Esophagus squamous epithelium (tissue), 5 donors: ENCODE measurements at regions of chr14 and their contacts with region 1.

Region 1: GRCh38 chr14:58072288-58073071 is 79.5 kb downstream of the ARMH4 start:
- DNase-seq: no peak
- H3K4me3 ChIP-seq: peak overlapping the region in 1 of 4 donors; percentile 46
- H3K27ac ChIP-seq: no peak overlapping the region
- H3K4me1 ChIP-seq: peaks cover 0 to 4% (median 0%) of the 10 kb centered on the region in 3 donors
- H3K27me3 ChIP-seq: no peaks in the 10 kb centered on the region
- CTCF ChIP-seq: peak in 5 of 6 experiments; percentile 41 to 74 (median 67)
- POLR2A ChIP-seq: no peak

Region 2: GRCh38 chr14:57486767-57487379 is 585.6 kb before region 1 on chr14:
- intact Hi-C with region 1: loop called (anchors 10 kb)
- DNase-seq: no peak
- H3K4me3 ChIP-seq: no peak overlapping the region
- H3K27ac ChIP-seq: no peak overlapping the region
- H3K4me1 ChIP-seq: no peaks in the 10 kb centered on the region
- H3K27me3 ChIP-seq: peaks cover 0 to 7% (median 0%) of the 10 kb centered on the region in 4 donors
- CTCF ChIP-seq: peak in 5 of 6 experiments; percentile 37 to 58 (median 45)
- POLR2A ChIP-seq: no peak

Region 3: DNA sequence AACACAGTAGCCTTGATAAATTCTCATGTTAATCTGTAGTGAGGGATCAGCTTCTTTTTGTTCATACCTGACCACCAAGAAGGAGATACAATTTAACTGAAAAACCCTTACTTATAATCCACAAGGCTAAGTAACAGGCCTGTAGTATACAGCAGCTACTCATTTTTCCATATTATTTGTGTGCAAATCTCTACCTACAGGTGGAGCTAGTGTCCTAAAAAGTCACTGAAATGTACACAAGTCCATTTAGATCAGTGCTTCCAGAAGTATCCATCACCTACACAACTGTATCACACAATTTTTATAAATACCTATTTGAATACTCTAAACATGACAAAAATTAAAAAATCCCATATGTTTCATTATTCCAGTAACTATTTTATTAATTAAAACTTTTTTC is 379.8 kb before region 1 on chr14:
- intact Hi-C with region 1: loop called (anchors 10 kb)
- DNase-seq: no peak
- H3K4me3 ChIP-seq: no peak overlapping the region
- H3K27ac ChIP-seq: no peak overlapping the region
- H3K4me1 ChIP-seq: no peaks in the 10 kb centered on the region
- H3K27me3 ChIP-seq: no peaks in the 10 kb centered on the region
- CTCF ChIP-seq: peak; percentile 13 to 67 (median 26)
- POLR2A ChIP-seq: no peak

Region 4: GRCh38 chr14:57785058-57785457 is 287.4 kb before region 1 on chr14:
- intact Hi-C with region 1: no loop called
- DNase-seq: no peak
- H3K4me3 ChIP-seq: no peak overlapping the region
- H3K27ac ChIP-seq: no peak overlapping the region
- H3K4me1 ChIP-seq: no peaks in the 10 kb centered on the region
- H3K27me3 ChIP-seq: no peaks in the 10 kb centered on the region
- CTCF ChIP-seq: no peak
- POLR2A ChIP-seq: no peak

Region 5: GRCh38 chr14:58133739-58134138 is 61.3 kb after region 1 on chr14:
- intact Hi-C with region 1: no loop called
- DNase-seq: no peak
- H3K4me3 ChIP-seq: no peak overlapping the region
- H3K27ac ChIP-seq: no peak overlapping the region
- H3K4me1 ChIP-seq: no peaks in the 10 kb centered on the region
- H3K27me3 ChIP-seq: no peaks in the 10 kb centered on the region
- CTCF ChIP-seq: no peak
- POLR2A ChIP-seq: no peak

Region 6: GRCh38 chr14:58299521-58300330 is 227.2 kb after region 1 on chr14:
- intact Hi-C with region 1: no loop called
- DNase-seq: no peak
- H3K4me3 ChIP-seq: peak overlapping the region; percentile 83 to 97 (median 88)
- H3K27ac ChIP-seq: peak overlapping the region; percentile 91 to 98 (median 94)
- H3K4me1 ChIP-seq: peaks cover 4 to 50% (median 23%) of the 10 kb centered on the region in 3 donors
- H3K27me3 ChIP-seq: no peaks in the 10 kb centered on the region
- CTCF ChIP-seq: no peak
- POLR2A ChIP-seq: no peak